ENCODE measurements at regions of chr4 and their contacts with region 1.

Region 1: DNA sequence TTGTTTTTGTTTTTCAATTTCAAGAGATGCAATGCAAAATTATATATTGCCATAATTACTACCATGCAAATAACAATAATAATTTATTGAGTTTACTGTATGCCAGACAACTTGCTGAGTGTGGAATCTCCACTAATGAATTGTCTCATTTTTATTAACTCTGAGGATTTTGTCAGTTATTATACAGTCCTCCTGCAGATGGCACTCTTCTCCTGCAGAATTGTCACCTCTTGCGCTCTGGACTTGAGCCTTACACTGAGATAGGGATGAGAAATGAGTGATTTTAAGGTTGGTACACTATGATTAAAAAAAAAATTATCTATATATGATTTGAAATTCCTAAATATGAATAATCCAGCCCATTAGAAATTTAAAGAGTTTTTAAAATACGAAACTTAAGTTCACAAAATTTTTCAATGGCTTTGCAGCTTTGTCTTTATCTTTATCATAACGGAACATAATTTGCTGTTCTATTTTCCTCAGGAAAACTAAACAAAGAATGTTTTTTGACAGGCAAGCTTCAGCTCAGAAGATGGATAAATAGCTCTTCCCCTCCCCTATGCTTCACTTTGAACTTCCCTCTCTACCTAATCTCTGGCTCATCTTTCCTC is 12.7 kb upstream of the PAQR3 start:
- DNase-seq: no peak
- H3K4me3 ChIP-seq: no peak overlapping the region
- CTCF ChIP-seq: peak; percentile 60

Region 2: DNA sequence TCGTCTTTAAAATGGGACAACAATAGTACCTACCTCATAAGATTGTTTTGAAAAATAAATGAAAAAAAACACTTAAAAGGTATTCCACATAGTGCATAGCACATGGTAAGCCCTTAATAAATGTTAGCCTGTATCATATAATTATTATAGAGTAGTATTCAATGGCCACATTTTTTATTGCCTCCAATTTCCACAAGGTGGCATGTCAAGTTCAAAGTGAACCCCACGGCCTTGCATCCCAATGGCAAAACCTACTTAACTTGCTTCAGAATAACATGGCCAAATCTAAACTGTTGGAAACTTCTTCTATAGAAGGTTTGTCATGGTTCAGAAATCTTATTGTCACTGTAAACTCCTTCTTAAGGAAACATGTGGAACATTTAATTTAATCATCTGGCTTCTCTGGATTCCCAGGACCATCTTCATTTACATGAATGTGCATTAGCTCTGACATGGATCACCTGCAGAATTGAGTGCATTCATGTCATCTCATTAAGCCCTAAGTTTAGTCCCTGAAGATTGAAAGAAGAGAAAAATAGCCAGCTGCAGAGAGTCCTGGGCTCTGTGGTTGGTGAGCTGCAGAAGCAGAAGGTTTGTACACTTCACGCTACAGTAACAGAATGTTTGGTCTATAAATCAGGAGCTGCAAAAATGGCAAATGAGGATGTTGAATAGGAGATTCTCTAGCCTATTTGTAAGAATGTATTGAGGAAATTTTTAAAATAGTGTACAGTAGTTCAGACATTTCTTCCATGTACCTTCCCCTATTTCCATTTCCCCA is 339.4 kb before region 1 on chr4:
- CTCF ChIA-PET with region 1: no interaction called
- POLR2A ChIA-PET with region 1: no interaction called
- DNase-seq: no peak
- H3K4me3 ChIP-seq: no peak overlapping the region
- CTCF ChIP-seq: peak; percentile 35

Region 3: DNA sequence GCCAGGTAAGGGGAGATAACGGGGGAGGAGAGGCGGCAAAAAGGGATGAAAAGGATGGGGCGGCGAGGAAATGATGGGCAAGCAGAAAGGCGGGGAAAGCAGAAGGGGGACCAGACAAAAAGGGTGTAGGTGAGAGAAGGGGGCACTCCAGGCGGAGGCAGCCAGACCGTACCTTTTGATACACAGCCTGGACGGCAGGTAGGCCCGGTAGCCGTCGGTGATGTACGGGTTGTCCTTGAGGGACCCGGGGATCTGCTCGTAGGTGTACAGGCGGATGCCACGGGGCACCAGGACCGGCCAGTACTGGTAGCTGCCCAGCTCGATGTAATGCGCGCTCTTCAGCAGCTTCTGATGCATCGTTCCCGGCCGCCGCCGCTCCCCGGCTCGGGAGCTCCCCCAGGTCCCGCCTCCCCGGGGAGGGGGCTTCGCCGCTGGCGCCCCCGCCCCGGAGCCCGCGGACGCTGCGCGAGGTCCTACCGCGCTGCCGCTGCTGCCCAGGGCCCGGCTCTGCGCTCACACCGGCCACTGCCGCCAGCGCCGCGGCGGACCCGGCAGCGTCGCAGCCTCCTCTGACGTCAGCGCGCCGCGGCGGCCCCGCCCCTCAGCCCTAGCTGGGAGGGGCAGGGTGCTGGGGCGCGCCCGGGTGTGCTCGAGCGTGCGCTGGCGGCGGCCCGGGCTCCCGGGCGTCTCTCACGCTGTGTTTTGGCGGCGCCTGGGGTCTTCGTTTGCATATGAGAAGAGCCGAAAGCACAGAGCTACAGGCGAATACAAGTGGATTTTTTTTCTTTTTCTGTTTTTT is 12.9 kb before region 1 on chr4 and contains the start of gene PAQR3:
- CTCF ChIA-PET with region 1: interaction called, 18 read pairs
- POLR2A ChIA-PET with region 1: no interaction called
- DNase-seq: no peak
- H3K4me3 ChIP-seq: peak within 1 kb of the TSS; percentile 93
- CTCF ChIP-seq: no peak

Region 4: DNA sequence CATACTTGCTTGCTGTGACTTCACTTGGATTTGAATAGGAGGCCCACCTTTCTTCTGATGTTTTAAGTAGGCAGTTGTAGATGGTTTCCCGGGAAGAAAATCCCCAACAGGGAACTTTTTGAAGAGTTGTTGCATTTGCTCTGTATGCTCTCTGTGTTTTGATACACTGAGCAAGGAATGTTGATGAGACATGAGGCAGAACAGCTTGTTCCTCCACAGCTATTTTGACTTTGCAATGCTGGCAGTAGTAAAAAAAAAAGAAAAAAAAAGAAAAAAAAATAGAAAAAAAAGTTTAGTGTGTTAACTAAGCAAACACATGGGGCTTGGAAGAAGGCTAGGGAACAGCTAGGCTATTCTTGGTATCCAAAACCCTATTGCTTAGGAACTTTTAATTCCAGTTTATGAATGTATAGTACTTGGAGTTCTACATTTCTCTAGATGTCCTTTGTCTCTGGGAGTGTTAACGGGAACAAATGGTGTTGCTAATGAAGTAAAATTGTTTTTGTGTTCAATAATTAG is 10.7 kb after region 1 on chr4:
- CTCF ChIA-PET with region 1: interaction called, 36 read pairs
- POLR2A ChIA-PET with region 1: no interaction called
- DNase-seq: peak; percentile 7
- H3K4me3 ChIP-seq: no peak overlapping the region
- CTCF ChIP-seq: no peak

Region 5: GRCh38 chr4:79331126-79331876 is 379.3 kb after region 1 on chr4:
- CTCF ChIA-PET with region 1: no interaction called
- POLR2A ChIA-PET with region 1: no interaction called
- DNase-seq: no peak
- H3K4me3 ChIP-seq: no peak overlapping the region
- CTCF ChIP-seq: no peak

Region 6: GRCh38 chr4:79576429-79576753 is 624.4 kb after region 1 on chr4:
- CTCF ChIA-PET with region 1: interaction called, 14 read pairs
- POLR2A ChIA-PET with region 1: no interaction called
- DNase-seq: no peak
- H3K4me3 ChIP-seq: no peak overlapping the region
- CTCF ChIP-seq: peak; percentile 47

Region 7: GRCh38 chr4:80138551-80139538 is 1186.9 kb after region 1 on chr4:
- CTCF ChIA-PET with region 1: no interaction called
- POLR2A ChIA-PET with region 1: no interaction called
- DNase-seq: no peak
- H3K4me3 ChIP-seq: no peak overlapping the region
- CTCF ChIP-seq: no peak

Region 8: DNA sequence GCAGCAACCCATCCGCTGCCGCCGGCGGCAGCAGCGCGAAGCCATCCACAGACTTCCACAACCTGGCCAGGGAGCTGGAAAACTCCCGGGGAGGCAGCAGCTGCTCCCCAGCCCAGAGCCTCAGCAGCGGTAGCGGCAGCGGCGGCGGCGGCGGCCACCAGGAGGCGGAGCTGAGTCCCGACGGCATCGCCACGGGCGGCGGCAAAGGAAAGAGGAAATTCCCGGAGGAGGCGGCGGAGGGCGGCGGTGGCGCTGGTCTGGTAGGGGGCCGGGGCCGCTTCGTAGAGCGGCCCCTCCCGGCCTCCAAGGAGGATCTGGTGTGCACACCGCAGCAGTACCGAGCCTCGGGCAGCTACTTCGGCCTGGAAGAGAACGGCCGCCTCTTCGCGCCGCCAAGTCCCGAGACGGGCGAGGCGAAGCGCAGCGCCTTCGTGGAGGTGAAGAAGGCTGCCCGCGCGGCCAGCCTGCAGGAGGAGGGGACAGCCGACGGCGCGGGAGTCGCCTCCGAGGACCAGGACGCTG is 1250.3 kb after region 1 on chr4:
- CTCF ChIA-PET with region 1: interaction called, 13 read pairs
- POLR2A ChIA-PET with region 1: no interaction called
- DNase-seq: no peak
- H3K4me3 ChIP-seq: peak overlapping the region; percentile 63
- CTCF ChIP-seq: peak; percentile 88

Region 9: DNA sequence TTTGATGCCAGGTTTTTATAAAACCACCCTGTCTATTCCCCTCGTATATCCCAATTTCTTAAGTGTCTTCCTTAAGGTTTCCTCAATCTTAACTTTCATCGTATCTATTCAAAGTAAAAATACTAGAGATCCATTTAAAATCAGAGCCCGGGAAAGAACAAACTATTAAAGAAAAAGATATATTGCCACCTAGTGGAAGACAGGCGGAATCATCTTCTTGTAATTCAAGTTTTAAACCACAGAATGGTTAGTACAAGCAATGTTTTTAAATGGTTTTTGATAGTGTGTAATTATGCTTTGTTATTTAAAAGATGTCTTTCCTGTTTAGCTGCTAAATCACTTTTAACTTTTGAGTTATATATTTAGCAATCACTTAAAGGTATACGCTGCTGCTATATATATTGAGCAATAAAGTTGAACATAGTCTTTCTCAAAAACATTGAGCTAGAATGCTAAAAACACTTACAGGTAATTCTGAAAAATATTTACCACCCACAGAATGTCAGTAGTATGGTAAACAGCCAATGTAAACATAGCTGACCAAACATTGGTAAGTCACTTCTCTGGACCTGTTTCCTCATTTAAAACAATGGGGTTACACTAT is 1263.6 kb after region 1 on chr4:
- CTCF ChIA-PET with region 1: interaction called, 19 read pairs
- POLR2A ChIA-PET with region 1: no interaction called
- DNase-seq: no peak
- H3K4me3 ChIP-seq: no peak overlapping the region
- CTCF ChIP-seq: peak; percentile 48

Measured in AG04449 (cell line).